Pancreas (tissue), 10 donors: ENCODE measurements at regions of chr2 and their contacts with region 1.

Region 1: GRCh38 chr2:171416009-171416926 is 17.5 kb downstream of the METTL8 start:
- DNase-seq: peak; percentile 80 to 91 (median 86)
- ATAC-seq: peak; percentile 99 to 100 (median 100)
- H3K4me3 ChIP-seq: no peak overlapping the region
- H3K27ac ChIP-seq: peak overlapping the region in 3 of 4 donors; percentile 35 to 48 (median 36)
- H3K4me1 ChIP-seq: peaks cover 0 to 4% (median 0%) of the 10 kb centered on the region in 3 donors
- H3K27me3 ChIP-seq: no peaks in the 10 kb centered on the region
- CTCF ChIP-seq: peak; percentile 47 to 77 (median 64)

Region 2: GRCh38 chr2:170966648-170967436 is 449.4 kb before region 1 on chr2:
- intact Hi-C with region 1: loop called in 1 of 3 experiments (anchors 5 kb)
- DNase-seq: no peak
- ATAC-seq: peak in 1 of 4 donors; percentile 26
- H3K4me3 ChIP-seq: no peak overlapping the region
- H3K27ac ChIP-seq: no peak overlapping the region
- H3K4me1 ChIP-seq: no peaks in the 10 kb centered on the region
- H3K27me3 ChIP-seq: no peaks in the 10 kb centered on the region
- CTCF ChIP-seq: no peak

Region 3: DNA sequence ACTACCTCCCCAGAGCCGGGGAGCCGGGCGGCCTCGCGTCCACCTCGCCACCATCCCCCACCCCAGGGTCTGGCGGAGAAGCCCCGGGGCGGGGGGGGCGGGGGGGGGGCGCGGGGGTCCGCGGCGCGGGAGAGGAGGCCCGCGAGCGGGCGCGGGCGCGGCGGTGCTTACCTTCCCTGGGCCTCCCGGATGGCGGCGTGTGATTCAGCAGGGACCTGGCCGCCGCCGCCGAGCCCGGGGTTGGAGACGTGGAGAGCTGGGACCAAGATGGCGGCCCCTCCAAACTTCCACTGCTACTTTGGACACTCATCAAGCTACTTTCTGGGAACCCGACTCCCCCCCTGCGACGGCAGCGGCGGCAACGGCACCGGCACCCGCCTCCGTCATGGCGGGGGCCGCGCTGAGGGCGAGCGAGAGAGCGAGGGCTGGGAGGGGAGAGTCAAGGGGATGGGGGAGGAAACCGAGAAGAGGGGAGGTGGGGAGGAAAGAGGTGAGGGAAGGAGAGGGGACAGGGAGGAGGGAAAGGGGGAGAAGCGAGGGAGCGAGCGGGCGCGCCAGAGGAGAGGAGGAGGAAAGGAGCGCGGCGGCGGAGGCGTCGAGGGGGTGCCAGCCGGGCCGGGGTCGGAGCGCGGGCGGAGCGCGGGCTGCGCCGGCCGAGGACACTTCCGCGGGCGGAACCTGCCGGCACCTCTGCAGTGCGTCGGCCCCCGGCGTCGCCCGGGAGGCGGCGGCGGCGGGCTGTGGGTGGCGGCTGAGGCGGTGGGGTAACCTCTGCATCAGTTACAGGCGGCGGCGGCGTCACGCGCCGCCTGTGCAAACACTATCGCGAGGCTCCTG is 255.9 kb before region 1 on chr2 and contains the start of gene TLK1:
- intact Hi-C with region 1: loop called in 1 of 3 experiments (anchors 10 kb)
- DNase-seq: peak; percentile 72 to 89 (median 80)
- ATAC-seq: peak; percentile 65 to 79 (median 72)
- H3K4me3 ChIP-seq: peak within 1 kb of the TSS; percentile 63 to 84 (median 68)
- H3K27ac ChIP-seq: peak within 1 kb of the TSS; percentile 82 to 96 (median 93)
- H3K4me1 ChIP-seq: peaks cover 0 to 25% (median 0%) of the 10 kb centered on the region in 3 donors
- H3K27me3 ChIP-seq: no peaks in the 10 kb centered on the region
- CTCF ChIP-seq: no peak
- total RNA-seq, gene TLK1: 25.8 to 43.4 (median 34.0) TPM

Region 4: DNA sequence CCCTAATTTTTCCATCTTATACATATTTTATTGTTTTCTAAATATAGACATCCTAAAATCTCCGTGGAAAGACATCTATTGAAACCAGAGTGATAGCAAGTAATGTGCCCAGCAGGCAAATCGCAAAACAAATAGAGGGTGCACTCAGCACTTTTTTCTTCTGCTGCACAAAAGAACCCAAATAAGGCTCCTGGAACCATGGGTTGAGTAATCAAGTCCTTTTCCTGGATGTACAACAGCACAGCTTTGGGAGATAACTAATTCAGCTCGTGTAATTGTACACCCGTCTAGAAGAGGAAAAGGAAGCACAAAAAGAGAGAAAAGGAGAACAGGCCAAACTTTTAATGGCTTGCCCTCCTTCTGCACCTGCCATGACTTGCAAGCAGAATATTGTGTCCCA is 128.7 kb before region 1 on chr2:
- intact Hi-C with region 1: no loop called
- DNase-seq: no peak
- ATAC-seq: no peak
- H3K4me3 ChIP-seq: no peak overlapping the region
- H3K27ac ChIP-seq: no peak overlapping the region
- H3K4me1 ChIP-seq: no peaks in the 10 kb centered on the region
- H3K27me3 ChIP-seq: no peaks in the 10 kb centered on the region
- CTCF ChIP-seq: no peak